ENCODE measurements at regions of chr4 and their contacts with region 1.

Region 1: GRCh38 chr4:114694770-114695169 is 96.2 kb downstream of the UGT8 start:
- DNase-seq: peak in 2 of 5 donors; percentile 57 to 59
- H3K4me3 ChIP-seq: no peak overlapping the region
- H3K27ac ChIP-seq: no peak overlapping the region
- H3K4me1 ChIP-seq: no peaks in the 10 kb centered on the region
- H3K27me3 ChIP-seq: no peaks in the 10 kb centered on the region
- CTCF ChIP-seq: peak; percentile 55

Region 2: DNA sequence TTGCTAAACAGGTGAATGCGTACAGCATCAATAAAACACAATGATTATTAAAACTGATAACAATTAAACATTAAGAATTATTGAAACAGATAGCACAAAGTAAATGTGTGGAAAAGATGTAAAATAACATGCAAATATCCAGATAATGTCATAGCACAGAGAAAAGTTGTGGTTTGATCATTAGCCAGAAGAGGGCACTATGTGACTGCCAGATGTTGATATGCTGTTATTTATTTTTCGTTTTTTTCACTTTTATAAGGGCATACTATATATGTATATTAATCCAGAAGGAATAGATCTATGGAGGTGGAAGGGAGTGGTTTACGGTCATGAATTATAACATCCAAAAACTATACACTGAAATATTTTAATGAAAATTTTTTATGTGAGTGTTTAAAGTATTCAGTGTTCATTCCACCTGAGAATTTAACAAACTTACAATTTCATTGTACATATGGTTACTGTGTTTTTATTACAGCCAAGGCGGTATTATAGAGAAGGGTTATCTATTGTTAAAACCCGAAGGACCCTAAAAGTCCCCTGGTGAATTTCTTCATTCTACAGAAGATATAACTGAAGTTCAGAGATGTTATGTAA is 308.0 kb before region 1 on chr4:
- intact Hi-C with region 1: loop called (anchors 10 kb)
- DNase-seq: peak in 1 of 5 donors; percentile 51
- H3K4me3 ChIP-seq: no peak overlapping the region
- H3K27ac ChIP-seq: no peak overlapping the region
- H3K4me1 ChIP-seq: no peaks in the 10 kb centered on the region
- H3K27me3 ChIP-seq: no peaks in the 10 kb centered on the region
- CTCF ChIP-seq: peak; percentile 64

Region 3: GRCh38 chr4:115165503-115165902 is 470.7 kb after region 1 on chr4:
- intact Hi-C with region 1: no loop called
- DNase-seq: no peak
- H3K4me3 ChIP-seq: no peak overlapping the region
- H3K27ac ChIP-seq: no peak overlapping the region
- H3K4me1 ChIP-seq: no peaks in the 10 kb centered on the region
- H3K27me3 ChIP-seq: no peaks in the 10 kb centered on the region
- CTCF ChIP-seq: no peak

Measured in kidney (tissue), 22 donors.